B cell (primary cell): ENCODE measurements at regions of chr18 and their contacts with region 1.

Region 1: GRCh38 chr18:9474983-9475642 is at the start of gene RALBP1:
- DNase-seq: peak; percentile 98
- ATAC-seq: peak; percentile 96
- H3K4me3 ChIP-seq: peak within 1 kb of the TSS; percentile 72 to 97 (median 92)
- H3K4me3 Mint-ChIP-seq: peak within 1 kb of the TSS; percentile 99
- H3K27ac ChIP-seq: peak within 1 kb of the TSS; percentile 64 to 78
- H3K27ac Mint-ChIP-seq: peak within 1 kb of the TSS; percentile 98
- H3K4me1 ChIP-seq: peaks cover 5 to 19% of the 10 kb centered on the region in 2 donors
- H3K4me1 Mint-ChIP-seq: peaks cover 39% of the 10 kb centered on the region
- H3K27me3 ChIP-seq: peaks cover 0 to 3% (median 0%) of the 10 kb centered on the region in 4 experiments
- H3K27me3 Mint-ChIP-seq: peaks cover 17% of the 10 kb centered on the region
- CTCF ChIP-seq: no peak
- total RNA-seq, gene RALBP1: 36.3 and 38.0 TPM in 2 replicates

Region 2: GRCh38 chr18:8608795-8609658 is 866.1 kb before region 1 on chr18 and contains the start of gene RAB12:
- CTCF ChIA-PET with region 1: interaction called, 4 read pairs
- POLR2A ChIA-PET with region 1: no interaction called
- intact Hi-C with region 1: loop called (anchors 10 kb)
- DNase-seq: peak; percentile 90
- ATAC-seq: peak; percentile 83
- H3K4me3 ChIP-seq: peak within 1 kb of the TSS; percentile 40 to 88 (median 76)
- H3K4me3 Mint-ChIP-seq: peak within 1 kb of the TSS; percentile 91
- H3K27ac ChIP-seq: peak within 1 kb of the TSS; percentile 42 to 72
- H3K27ac Mint-ChIP-seq: peak within 1 kb of the TSS; percentile 87
- H3K4me1 ChIP-seq: peaks cover 60 to 62% of the 10 kb centered on the region in 2 donors
- H3K4me1 Mint-ChIP-seq: peaks cover 72% of the 10 kb centered on the region
- H3K27me3 ChIP-seq: no peaks in the 10 kb centered on the region
- H3K27me3 Mint-ChIP-seq: no peaks in the 10 kb centered on the region
- CTCF ChIP-seq: peak; percentile 73
- total RNA-seq, gene RAB12: 38.7 and 40.9 TPM in 2 replicates

Region 3: DNA sequence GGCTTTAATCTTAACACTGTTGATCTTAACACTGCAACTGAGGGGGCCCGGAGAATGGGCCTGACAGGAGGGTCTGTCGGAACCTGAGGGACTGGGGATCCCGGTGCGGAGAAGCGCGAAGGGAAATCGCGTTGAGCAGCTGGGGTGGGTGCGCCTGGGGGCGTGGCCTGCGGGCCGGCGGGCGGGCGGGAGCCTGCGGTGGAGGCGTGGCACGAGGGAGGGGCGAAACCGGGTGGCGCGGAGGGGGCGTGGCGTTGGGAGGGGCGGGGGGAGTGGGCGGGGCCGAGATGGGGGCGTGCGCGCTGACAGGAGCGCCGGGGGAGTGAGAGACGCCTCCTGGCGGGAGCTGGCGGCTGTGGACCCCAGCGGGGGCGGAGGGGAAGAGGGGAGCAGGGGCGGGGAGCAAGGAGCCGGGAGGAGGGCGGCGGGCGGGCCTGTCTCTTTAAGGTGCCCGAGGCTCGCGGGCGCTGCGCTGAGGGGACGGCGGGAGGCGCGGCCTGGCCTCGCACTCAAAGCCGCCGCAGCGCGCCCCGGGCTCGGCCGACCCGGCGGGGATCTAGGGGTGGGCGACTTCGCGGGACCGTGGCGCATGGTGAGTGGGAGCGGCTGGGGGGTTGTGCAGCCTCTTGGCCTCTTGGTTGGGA is 140.7 kb before region 1 on chr18 and contains the start of gene TWSG1:
- CTCF ChIA-PET with region 1: interaction called, 3 read pairs
- POLR2A ChIA-PET with region 1: no interaction called
- intact Hi-C with region 1: loop called (anchors 1 kb)
- DNase-seq: peak; percentile 94
- ATAC-seq: peak; percentile 93
- H3K4me3 ChIP-seq: peak within 1 kb of the TSS; percentile 59 to 88 (median 71)
- H3K4me3 Mint-ChIP-seq: peak within 1 kb of the TSS; percentile 95
- H3K27ac ChIP-seq: peak within 1 kb of the TSS in 1 of 2 donors; percentile 65
- H3K27ac Mint-ChIP-seq: peak within 1 kb of the TSS; percentile 82
- H3K4me1 ChIP-seq: peaks cover 6 to 19% of the 10 kb centered on the region in 2 donors
- H3K4me1 Mint-ChIP-seq: peaks cover 20% of the 10 kb centered on the region
- H3K27me3 ChIP-seq: peaks cover 0 to 2% (median 0%) of the 10 kb centered on the region in 4 experiments
- H3K27me3 Mint-ChIP-seq: peaks cover 3% of the 10 kb centered on the region
- CTCF ChIP-seq: peak; percentile 44
- total RNA-seq, gene TWSG1: 5.5 and 6.3 TPM in 2 replicates

Region 4: DNA sequence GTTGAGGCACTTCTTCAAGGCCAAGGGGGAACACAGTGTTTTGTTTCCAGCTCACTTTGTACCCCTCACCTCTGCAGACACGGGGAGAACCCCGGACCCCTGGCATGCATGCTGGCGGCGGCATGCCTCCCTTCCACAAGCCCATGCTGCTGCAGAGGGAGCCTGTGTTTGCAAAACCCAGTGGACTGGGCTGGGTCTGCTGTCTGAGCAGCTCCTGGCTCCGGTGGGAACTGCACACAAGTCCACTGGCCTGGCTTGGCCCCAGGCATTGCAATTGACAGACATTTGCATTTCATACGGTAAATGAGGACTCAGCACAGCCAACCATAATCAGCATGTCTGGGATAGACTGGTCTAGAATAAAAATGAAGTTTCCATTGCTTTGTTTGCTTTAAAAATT is 62.6 kb after region 1 on chr18:
- CTCF ChIA-PET with region 1: no interaction called
- POLR2A ChIA-PET with region 1: interaction called, 11 read pairs
- intact Hi-C with region 1: no loop called
- DNase-seq: no peak
- ATAC-seq: no peak
- H3K4me3 ChIP-seq: no peak overlapping the region
- H3K4me3 Mint-ChIP-seq: no peak overlapping the region
- H3K27ac ChIP-seq: no peak overlapping the region
- H3K27ac Mint-ChIP-seq: no peak overlapping the region
- H3K4me1 ChIP-seq: no peaks in the 10 kb centered on the region
- H3K4me1 Mint-ChIP-seq: no peaks in the 10 kb centered on the region
- H3K27me3 ChIP-seq: no peaks in the 10 kb centered on the region
- H3K27me3 Mint-ChIP-seq: no peaks in the 10 kb centered on the region
- CTCF ChIP-seq: no peak

Region 5: GRCh38 chr18:10525371-10526210 is 1050.5 kb after region 1 on chr18 and contains the start of gene NAPG:
- CTCF ChIA-PET with region 1: no interaction called
- POLR2A ChIA-PET with region 1: no interaction called
- intact Hi-C with region 1: loop called (anchors 5 kb)
- DNase-seq: peak; percentile 96
- ATAC-seq: peak; percentile 90
- H3K4me3 ChIP-seq: peak within 1 kb of the TSS; percentile 79 to 94 (median 88)
- H3K4me3 Mint-ChIP-seq: peak within 1 kb of the TSS; percentile 99
- H3K27ac ChIP-seq: peak within 1 kb of the TSS; percentile 77 to 80
- H3K27ac Mint-ChIP-seq: peak within 1 kb of the TSS; percentile 96
- H3K4me1 ChIP-seq: peaks cover 20 to 39% of the 10 kb centered on the region in 2 donors
- H3K4me1 Mint-ChIP-seq: peaks cover 51% of the 10 kb centered on the region
- H3K27me3 ChIP-seq: no peaks in the 10 kb centered on the region
- H3K27me3 Mint-ChIP-seq: no peaks in the 10 kb centered on the region
- CTCF ChIP-seq: no peak
- total RNA-seq, gene NAPG: 31.8 and 38.7 TPM in 2 replicates